Motor neuron (in vitro differentiated cells): ENCODE measurements at regions of chr17 and their contacts with region 1.

Region 1: GRCh38 chr17:5608399-5609112 is 24.2 kb upstream of the NLRP1 start:
- ATAC-seq: peak in 5 of 8 experiments; percentile 64 to 75 (median 68)
- H3K4me3 ChIP-seq: no peak overlapping the region
- H3K27ac ChIP-seq: no peak overlapping the region
- H3K4me1 ChIP-seq: peaks cover 17 to 18% of the 10 kb centered on the region in 2 donors

Region 2: GRCh38 chr17:4939796-4940624 is 668.5 kb before region 1 on chr17 and contains the starts of genes RNF167 and SLC25A11:
- in situ Hi-C with region 1: no loop called
- ATAC-seq: peak; percentile 77 to 92 (median 88)
- H3K4me3 ChIP-seq: peak within 1 kb of the TSS; percentile 53 to 85 (median 61)
- H3K27ac ChIP-seq: peak within 1 kb of the TSS; percentile 96 to 99
- H3K4me1 ChIP-seq: peaks cover 14 to 16% of the 10 kb centered on the region in 2 donors
- total RNA-seq, gene RNF167: 74.1 to 109 (median 89.5) TPM
- total RNA-seq, gene SLC25A11: 36.1 to 100 (median 51.0) TPM

Region 3: DNA sequence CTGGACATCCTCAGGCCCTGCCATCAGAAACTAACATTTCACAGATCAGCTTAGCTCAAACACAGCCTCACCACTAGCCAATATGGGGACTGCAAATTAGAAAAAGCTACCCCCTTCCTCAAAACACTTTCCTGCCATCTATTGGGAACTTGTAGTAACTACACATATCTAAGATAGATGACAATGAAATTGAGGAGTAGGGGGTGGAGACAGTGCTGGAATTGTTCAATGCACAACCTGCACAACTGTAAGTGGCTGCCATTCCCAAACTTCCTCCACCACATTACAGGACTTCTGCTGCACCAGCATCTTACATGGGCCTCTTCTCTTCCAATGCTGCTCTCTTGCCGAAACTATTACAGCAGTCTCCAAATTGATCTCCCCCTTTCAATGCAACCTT is 804.5 kb after region 1 on chr17:
- in situ Hi-C with region 1: loop called in 1 of 9 experiments (anchors 10 kb)
- ATAC-seq: peak; percentile 21 to 70 (median 44)
- H3K4me3 ChIP-seq: no peak overlapping the region
- H3K27ac ChIP-seq: no peak overlapping the region
- H3K4me1 ChIP-seq: peaks cover 4 to 6% of the 10 kb centered on the region in 2 donors